SK-N-SH (cell line): ENCODE measurements at regions of chr1 and their contacts with region 1.

Region 1: DNA sequence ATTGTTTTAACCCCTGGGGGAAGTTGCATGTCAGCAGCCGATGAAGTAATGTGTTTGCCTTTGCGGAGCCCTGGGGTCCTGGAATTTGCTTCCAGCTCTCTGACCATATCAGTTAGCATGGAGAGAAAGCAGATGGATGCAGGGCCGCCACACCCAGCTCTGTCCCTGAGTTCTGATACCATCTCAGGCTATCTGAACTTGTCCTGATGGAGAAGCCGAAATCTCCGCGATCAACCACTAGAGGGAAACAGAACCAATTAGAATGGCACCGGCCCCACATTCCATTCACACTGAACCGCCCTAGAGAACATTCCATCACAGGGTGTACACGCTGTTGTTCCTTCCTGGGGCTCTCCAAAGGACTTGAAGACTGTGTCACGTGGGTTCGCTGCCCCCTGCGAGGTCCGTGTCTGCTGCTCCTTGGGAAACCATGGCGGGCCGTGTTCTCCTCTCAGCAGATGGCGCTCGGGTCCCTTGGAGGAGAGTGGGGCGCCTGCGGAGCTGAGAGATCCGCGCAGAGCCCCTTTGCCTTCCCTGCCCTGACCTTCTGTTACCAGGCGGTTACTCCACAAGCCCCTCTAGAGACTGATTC is 75.4 kb downstream of the ABCA4 start:
- DNase-seq: peak; percentile 72
- H3K4me3 ChIP-seq: no peak overlapping the region; a peak in 1 of 4 replicates
- H3K27ac ChIP-seq: peak overlapping the region in 1 of 2 experiments; percentile 58; a peak in 3 of 4 replicates
- H3K4me1 ChIP-seq: peaks cover 16 to 21% of the 10 kb centered on the region in 2 experiments; a peak in 3 of 4 replicates
- H3K27me3 ChIP-seq: no peaks in the 10 kb centered on the region
- CTCF ChIP-seq: peak; percentile 81
- EP300 ChIP-seq: peak; percentile 54 to 58; a peak in 3 of 4 replicates
- RAD21 ChIP-seq: peak; percentile 51

Region 2: GRCh38 chr1:94068999-94069918 is 23.7 kb after region 1 on chr1:
- CTCF ChIA-PET with region 1: interaction called, 299 read pairs
- POLR2A ChIA-PET with region 1: no interaction called
- DNase-seq: no peak
- H3K4me3 ChIP-seq: no peak overlapping the region
- H3K27ac ChIP-seq: no peak overlapping the region
- H3K4me1 ChIP-seq: peaks cover 14 to 36% of the 10 kb centered on the region in 2 experiments; a peak in 3 of 4 replicates
- H3K27me3 ChIP-seq: no peaks in the 10 kb centered on the region
- CTCF ChIP-seq: no peak
- EP300 ChIP-seq: no peak
- RAD21 ChIP-seq: no peak

Region 3: GRCh38 chr1:94228640-94229375 is 183.2 kb after region 1 on chr1:
- CTCF ChIA-PET with region 1: interaction called, 27 read pairs
- POLR2A ChIA-PET with region 1: no interaction called
- DNase-seq: no peak
- H3K4me3 ChIP-seq: no peak overlapping the region
- H3K27ac ChIP-seq: no peak overlapping the region
- H3K4me1 ChIP-seq: peaks cover 0 to 17% of the 10 kb centered on the region in 2 experiments; a peak in 2 of 4 replicates
- H3K27me3 ChIP-seq: no peaks in the 10 kb centered on the region
- CTCF ChIP-seq: no peak
- EP300 ChIP-seq: no peak
- RAD21 ChIP-seq: no peak

Region 4: DNA sequence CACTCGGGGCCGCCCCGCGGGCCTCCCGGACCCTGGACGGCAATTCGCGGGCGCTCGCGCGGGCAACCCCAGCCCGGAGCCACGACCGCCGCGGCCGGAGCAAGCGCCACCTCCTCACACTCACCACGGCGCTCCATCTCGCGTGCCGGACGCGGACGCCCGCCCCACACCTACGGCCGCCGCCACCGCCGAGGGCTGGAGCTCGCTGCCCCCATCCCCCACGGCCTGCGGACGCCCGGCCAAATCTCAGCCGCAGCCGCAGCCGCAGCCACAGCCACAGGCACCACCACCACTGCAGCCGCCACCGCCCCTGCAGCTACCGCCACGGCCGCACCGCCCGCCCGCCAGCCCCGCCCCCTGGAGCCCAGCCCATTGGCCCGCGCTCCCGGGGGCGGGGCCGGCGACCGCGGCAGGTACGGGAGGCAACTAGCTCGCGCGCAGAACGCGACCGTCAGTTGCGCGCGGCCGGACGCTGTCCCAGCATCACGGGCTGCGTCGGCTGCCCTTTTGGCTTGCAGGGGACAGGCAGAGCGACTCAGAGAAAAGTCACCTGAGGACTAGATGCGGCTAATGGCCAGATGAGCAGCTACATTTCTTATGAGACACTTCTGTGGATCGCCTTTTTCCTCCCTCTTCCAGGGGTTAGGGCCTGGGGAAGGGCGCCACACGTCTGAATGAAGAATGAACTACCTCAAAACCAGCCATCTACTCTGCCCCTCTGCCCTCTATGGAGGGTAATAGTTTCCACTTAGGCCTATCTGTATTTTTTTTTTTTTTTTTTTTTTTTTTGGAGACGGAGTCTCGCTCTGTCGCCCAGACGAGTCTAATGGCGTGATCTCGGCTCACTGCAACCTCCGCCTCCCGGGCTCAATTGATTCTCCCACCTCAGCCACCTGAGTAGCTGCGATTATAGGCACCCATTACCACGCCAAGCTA is 192.0 kb after region 1 on chr1 and contains the start of gene ARHGAP29:
- CTCF ChIA-PET with region 1: interaction called, 40 read pairs
- POLR2A ChIA-PET with region 1: no interaction called
- DNase-seq: peak; percentile 96
- H3K4me3 ChIP-seq: peak within 1 kb of the TSS; percentile 89 to 93
- H3K27ac ChIP-seq: peak within 1 kb of the TSS; percentile 31 to 76
- H3K4me1 ChIP-seq: peaks cover 6 to 12% of the 10 kb centered on the region in 2 experiments; a peak in 2 of 4 replicates
- H3K27me3 ChIP-seq: no peaks in the 10 kb centered on the region
- CTCF ChIP-seq: no peak; the same call in 1 of the 2 replicates
- EP300 ChIP-seq: no peak
- RAD21 ChIP-seq: peak; percentile 31
- polyA plus RNA-seq, gene ARHGAP29: 20.1 and 23.3 TPM in 2 replicates

Region 5: DNA sequence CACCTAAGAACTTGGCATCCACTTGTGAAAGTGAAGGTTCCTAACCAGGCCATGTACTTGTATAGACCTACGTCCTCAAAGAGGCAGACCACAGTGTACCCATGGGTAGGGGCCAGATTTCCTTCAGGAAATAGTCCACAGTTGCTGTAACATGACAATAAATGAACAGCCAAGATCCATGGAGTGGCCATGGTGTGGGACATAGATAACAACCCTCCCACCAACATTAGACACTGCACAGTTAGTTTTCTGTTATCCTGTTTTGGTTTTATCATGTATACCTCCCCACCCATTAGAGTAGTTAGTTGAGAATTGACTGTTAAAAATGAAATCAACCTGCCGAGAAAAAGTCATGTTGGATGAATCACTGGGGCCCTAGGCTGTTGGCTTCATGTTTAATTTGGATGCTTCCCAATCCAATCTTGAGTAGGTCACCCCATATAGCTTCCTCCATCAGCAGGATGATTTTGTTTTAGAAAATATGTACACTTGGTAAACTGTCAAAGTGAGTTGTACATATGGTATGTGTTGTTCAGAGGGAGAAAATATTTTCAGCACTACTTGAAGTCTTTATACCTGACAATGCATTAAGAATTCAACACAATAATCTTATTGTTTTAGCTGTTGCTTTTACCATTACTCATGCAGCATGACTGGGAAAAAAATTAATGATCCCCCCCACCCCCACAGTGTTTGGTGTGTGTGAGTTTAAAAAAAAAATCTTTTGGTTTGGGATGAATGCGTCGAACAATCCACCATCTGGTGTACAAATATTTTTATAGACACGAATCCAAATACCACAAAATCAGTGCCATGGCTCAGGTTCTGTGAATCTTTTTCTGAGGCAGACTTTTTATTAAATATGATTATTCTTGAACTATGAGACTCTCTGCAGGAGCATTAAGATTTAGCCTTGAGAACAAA is 280.1 kb after region 1 on chr1:
- CTCF ChIA-PET with region 1: interaction called, 889 read pairs
- POLR2A ChIA-PET with region 1: interaction called, 3 read pairs
- DNase-seq: no peak
- H3K4me3 ChIP-seq: peak overlapping the region; percentile 6 to 30; a peak in 1 of 4 replicates
- H3K27ac ChIP-seq: peak overlapping the region; percentile 88 to 89
- H3K4me1 ChIP-seq: peaks cover 30 to 50% of the 10 kb centered on the region in 2 experiments
- H3K27me3 ChIP-seq: no peaks in the 10 kb centered on the region
- CTCF ChIP-seq: no peak
- EP300 ChIP-seq: peak in 1 of 2 experiments; percentile 98; a peak in 3 of 4 replicates
- RAD21 ChIP-seq: no peak

Region 6: GRCh38 chr1:94395748-94396309 is 350.3 kb after region 1 on chr1:
- CTCF ChIA-PET with region 1: no interaction called
- POLR2A ChIA-PET with region 1: no interaction called
- DNase-seq: no peak
- H3K4me3 ChIP-seq: no peak overlapping the region
- H3K27ac ChIP-seq: no peak overlapping the region
- H3K4me1 ChIP-seq: no peaks in the 10 kb centered on the region
- H3K27me3 ChIP-seq: peaks cover 4% of the 10 kb centered on the region; the same call in 1 of the 2 replicates
- CTCF ChIP-seq: no peak
- EP300 ChIP-seq: no peak
- RAD21 ChIP-seq: no peak